Activated T-helper 1 cell treated with anti-CD3 and anti-CD28 coated beads, Interleukin-12 subunit alpha, Interleukin-12 subunit beta, Interleukin-2, Interleukin-4 antibody, amounts not matched to agents 30 ng/mL and 10 ng/mL and 1 ng/mL, durations not matched to agents 14 hours and 24 hours and 36 hours (primary cell): ENCODE measurements at regions of chr22 and their contacts with region 1.

Region 1: DNA sequence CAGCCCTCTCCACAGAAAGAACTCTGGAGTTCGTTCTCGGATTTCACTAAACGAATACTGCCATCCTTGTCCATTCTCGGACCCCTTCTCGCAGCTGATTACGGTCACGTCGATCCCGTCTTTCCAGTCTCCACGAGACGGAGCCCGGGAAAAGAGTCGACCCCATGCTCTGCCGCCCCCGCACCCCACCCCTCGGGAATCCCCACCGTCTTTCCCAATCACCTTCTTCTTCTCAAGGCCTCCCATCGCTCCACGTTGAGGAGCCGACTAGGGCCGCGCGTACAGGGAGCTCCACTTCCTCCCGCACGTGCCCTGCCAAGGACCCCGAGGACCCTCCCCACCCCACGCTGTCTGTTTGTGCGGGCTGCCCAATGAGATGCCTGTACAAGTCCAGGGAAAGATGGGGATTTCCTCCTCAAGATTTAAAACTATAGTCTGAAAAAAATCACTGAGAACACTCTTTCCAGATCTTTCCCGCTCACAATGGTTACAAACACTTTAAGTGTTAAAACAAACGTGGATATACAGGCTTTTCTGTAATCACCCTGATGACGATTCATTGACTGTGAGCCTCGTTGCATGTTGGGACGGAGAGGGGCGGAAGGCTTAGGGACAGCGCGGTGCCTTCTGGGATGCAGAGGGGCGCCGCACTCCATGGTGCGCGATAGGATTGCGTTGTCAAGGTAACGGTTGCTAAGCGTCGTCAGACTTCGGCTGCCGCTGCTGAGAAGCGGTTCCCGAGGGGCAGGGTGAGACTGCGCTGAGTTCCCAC is at the start of gene PES1:
- DNase-seq: peak; percentile 93
- H3K4me3 Mint-ChIP-seq: no peak within 1 kb of the TSS
- H3K27ac Mint-ChIP-seq: no peak within 1 kb of the TSS
- H3K4me1 Mint-ChIP-seq: no peaks in the 10 kb centered on the region
- H3K27me3 Mint-ChIP-seq: peaks cover 12% of the 10 kb centered on the region
- total RNA-seq, gene PES1: 168 and 169 TPM in 2 replicates

Region 2: GRCh38 chr22:29883045-29883774 is 708.6 kb before region 1 on chr22 and contains the start of gene MTMR3:
- intact Hi-C with region 1: loop called (anchors 5 kb)
- DNase-seq: peak; percentile 94
- H3K4me3 Mint-ChIP-seq: peak within 1 kb of the TSS; percentile 82
- H3K27ac Mint-ChIP-seq: peak within 1 kb of the TSS; percentile 48
- H3K4me1 Mint-ChIP-seq: peaks cover 7% of the 10 kb centered on the region
- H3K27me3 Mint-ChIP-seq: peaks cover 5% of the 10 kb centered on the region
- total RNA-seq, gene MTMR3: 20.6 and 27.8 TPM in 2 replicates

Region 3: DNA sequence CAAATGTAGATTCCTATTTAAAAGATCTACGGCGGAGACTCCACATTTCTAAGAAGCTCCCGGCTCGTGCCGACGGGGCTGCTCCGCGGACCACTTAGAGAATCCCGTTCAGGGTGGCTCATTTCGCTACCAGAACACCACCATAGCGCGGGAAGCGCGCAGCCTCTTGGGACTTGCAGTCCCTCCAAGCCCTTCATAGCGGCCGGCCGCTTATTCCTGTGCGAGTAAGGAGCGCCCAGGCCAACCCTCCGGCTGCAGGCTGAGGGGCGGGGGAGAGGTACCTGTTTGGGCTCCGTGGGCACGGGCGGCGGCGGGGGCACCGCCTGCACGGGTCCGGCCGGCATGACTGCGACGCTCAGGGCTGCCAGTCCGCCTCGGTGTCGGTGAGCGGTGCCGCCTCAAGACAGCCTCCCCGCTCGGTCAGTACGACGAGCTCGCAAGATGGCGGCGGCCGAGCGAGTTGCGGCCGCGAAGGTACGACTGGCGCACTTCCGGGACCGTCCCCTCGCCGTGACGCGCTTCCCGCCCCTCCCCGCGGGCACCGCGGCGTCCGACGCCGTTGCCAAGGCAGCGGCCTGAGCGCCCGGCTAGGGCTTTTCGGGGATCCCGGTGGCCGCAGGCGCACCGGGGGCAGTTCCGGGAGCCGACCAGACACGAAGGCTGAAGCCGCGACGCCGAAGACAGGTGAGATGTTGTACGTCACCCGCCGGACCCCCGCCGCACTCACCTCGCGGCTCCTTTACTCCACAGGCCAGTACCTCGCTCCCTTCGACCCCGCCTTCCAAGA is 235.1 kb before region 1 on chr22 and contains the starts of genes CCDC157 and SF3A1:
- intact Hi-C with region 1: loop called (anchors 1 kb)
- DNase-seq: peak; percentile 88
- H3K4me3 Mint-ChIP-seq: peak within 1 kb of the TSS; percentile 94
- H3K27ac Mint-ChIP-seq: peak within 1 kb of the TSS; percentile 90
- H3K4me1 Mint-ChIP-seq: peaks cover 43% of the 10 kb centered on the region
- H3K27me3 Mint-ChIP-seq: peaks cover 8% of the 10 kb centered on the region
- total RNA-seq, gene CCDC157: 2.4 and 3.0 TPM in 2 replicates
- total RNA-seq, gene SF3A1: 308 and 310 TPM in 2 replicates

Region 4: GRCh38 chr22:30430933-30431332 is 160.8 kb before region 1 on chr22:
- intact Hi-C with region 1: no loop called
- DNase-seq: no peak
- H3K4me3 Mint-ChIP-seq: no peak overlapping the region
- H3K27ac Mint-ChIP-seq: no peak overlapping the region
- H3K4me1 Mint-ChIP-seq: peaks cover 40% of the 10 kb centered on the region
- H3K27me3 Mint-ChIP-seq: peaks cover 4% of the 10 kb centered on the region

Region 5: DNA sequence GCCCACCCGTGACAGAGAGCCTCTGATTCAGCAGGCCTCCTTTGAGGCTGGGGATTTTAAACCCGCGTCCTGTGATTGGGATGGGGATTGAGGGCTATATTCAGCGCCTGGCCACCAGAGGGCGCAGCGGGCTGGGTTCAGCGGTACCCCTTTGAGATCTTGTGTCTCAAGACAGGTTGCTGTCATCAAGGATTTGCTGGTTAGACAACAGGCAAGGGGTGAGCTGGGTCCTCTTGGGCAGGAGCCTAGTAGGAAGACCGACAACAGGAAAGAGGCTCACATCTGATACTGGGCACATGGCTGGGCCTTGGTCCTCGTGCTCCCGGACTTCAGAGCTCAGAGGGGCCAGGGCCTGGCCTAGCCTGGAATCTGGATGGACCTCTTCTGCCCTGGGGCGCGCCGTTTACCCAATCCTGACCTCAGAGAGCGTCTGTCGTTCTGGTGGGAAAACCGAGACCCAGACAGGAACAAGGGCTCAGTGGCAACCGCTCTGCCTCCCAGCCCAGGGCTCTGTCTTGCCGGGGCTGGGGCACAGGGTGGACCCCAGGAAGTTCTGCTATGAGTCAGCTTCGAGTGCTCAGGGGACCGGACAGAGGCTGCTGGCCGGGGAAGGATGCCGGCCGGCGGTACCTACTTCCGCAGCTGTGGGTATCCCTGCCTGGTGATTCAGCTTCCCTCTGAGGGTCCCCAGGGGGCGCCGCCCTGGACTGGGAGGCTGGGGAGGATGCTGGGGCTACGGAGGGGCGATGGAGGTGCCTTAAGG is 42.9 kb after region 1 on chr22:
- intact Hi-C with region 1: loop called (anchors 1 kb)
- DNase-seq: peak; percentile 82
- H3K4me3 Mint-ChIP-seq: peak overlapping the region; percentile 85
- H3K27ac Mint-ChIP-seq: peak overlapping the region; percentile 92
- H3K4me1 Mint-ChIP-seq: peaks cover 29% of the 10 kb centered on the region
- H3K27me3 Mint-ChIP-seq: no peaks in the 10 kb centered on the region

Region 6: DNA sequence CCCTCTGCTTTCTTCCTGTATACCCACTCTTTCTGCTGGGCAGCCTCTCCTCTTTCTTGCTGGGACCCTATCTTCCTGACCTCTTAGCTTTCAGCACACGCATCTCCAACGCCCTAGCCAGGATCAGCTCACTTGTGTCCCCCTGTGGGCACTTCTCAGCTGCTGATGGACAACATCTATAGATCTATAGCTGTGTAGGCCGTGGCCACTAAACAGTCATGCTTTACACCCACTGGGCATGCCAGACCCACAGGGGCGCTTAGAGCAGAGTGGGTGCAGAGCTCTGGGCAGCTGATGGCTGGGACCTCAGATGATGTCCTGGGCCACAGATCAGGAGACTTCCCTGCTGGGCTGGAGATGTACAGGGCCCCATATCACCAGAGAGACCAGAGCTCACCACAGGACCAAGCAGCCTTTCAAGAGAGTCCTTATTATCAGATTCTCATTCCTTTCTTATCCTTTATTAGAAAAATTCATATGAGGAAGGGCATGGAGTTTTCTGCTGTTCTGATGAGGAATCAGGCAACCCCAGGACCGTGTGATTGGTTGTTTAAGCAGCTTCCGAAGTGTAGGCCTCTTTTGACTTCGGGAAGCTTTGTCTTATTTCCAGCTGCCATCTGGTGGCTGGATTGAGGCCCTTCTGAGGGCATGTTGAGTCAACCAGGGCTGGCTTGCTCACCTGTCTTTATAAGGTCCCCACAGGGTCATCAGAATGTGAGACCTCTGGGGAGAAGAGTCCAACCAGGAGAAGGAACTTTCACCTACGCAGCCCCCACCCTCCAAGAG is 163.4 kb after region 1 on chr22:
- intact Hi-C with region 1: loop called (anchors 1 kb)
- DNase-seq: peak; percentile 45
- H3K4me3 Mint-ChIP-seq: no peak overlapping the region
- H3K27ac Mint-ChIP-seq: peak overlapping the region; percentile 29
- H3K4me1 Mint-ChIP-seq: peaks cover 11% of the 10 kb centered on the region
- H3K27me3 Mint-ChIP-seq: peaks cover 4% of the 10 kb centered on the region